Endothelial cell of umbilical vein (primary cell): ENCODE measurements at regions of chr1 and their contacts with region 1.

Region 1: DNA sequence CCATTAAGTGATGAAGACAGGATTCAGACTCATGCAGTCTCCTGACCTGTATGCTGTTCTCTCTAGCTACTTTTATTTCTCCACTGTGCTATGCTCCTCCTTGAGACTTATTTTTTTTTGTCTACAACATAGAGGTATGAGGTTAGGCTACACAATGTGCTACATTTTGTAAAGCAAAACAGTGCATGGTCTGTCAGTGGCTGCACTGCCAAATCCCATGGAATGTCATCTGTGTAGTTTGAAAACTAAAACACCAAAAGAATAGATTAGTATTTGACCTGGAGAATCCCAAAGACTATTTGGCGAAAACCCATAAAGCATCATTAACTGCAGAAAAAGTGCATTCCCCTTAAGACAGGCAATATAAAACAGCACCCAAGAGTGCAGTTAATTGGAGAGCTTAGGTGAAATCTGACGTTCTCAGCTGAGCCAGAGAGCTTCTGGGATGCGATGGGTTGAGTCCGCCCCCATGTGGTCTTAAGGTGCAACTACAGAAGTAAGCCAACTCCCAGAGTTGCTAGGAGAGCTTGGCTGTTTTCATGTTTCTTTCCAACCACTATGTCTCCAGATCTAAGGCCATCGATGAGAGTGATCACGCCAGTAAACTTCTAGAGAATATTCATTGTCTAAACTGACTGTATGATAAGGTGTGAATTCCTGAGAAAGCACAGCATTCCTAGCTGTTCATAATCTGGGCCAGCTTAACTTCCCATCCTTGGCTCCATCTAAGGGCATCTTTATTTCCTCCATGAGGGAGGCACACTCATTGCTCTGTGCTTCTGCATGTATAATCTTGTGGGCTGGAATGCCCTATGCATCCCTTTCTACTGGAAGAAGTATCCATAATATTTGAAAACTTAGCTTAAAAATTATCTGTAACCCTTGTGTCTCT is 20.7 kb upstream of the CYP2J2 start:
- DNase-seq: peak; percentile 67
- H3K4me3 ChIP-seq: no peak overlapping the region
- H3K27ac ChIP-seq: no peak overlapping the region
- H3K4me1 ChIP-seq: no peaks in the 10 kb centered on the region
- H3K27me3 ChIP-seq: peaks cover 0 to 10% of the 10 kb centered on the region in 2 experiments
- CTCF ChIP-seq: peak; percentile 84 to 85
- POLR2A ChIP-seq: no peak

Region 2: DNA sequence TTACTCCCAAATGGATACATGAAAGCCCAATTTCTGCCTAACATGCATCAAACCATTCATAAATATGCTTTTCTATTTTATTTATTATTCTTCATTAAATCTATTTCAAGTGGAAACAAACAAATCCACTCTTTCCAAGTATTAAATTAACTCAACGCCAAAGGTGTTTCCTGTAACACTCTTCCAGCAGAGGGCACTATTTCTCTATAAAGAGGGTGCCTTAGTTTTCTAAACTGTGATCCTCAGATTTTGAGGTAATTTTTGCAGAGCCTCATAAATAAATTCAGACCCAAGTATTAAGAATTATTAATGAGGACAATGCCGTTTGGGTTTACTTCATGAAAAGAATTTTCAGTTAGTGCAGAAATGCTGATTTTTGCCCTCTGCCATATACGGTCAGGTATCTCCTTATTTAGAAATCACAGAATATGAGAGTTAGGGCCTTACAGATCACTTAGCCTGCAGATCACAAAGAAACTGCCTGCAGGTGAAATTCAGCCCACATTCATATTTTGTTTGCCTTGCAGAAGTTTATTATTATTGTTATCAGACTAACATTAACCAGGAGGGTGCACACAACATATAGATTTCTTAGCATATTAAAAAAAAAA is 1207.3 kb before region 1 on chr1:
- CTCF ChIA-PET with region 1: interaction called, 5 read pairs
- POLR2A ChIA-PET with region 1: no interaction called
- dilution Hi-C with region 1: no loop called
- intact Hi-C with region 1: loop called (anchors 5 kb)
- DNase-seq: peak; percentile 73
- H3K4me3 ChIP-seq: no peak overlapping the region
- H3K27ac ChIP-seq: no peak overlapping the region
- H3K4me1 ChIP-seq: peaks cover 3% of the 10 kb centered on the region
- H3K27me3 ChIP-seq: no peaks in the 10 kb centered on the region
- CTCF ChIP-seq: peak; percentile 31 to 38
- POLR2A ChIP-seq: no peak

Region 3: DNA sequence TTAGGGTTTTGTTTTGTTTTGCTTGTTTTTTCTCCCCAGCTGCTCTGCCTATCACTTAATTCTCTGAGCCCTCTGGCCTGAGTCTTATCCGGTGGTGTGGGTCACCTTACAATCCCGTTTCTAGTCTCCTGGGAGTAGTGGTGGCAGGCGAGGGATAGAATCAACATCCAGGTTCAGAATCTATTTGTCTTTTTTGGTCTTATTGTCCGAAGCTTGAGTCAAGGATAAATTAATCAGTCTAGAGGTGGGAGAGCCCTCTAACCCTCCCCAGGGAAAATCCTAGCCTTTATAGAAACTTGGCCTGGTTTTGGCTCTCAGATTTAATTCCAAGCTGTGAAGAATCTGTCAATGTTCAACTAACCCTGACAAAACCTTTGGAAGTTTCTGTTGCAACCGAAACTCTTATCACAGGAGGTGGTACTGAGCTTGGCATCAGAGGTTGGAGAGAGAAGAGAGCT is 404.1 kb before region 1 on chr1:
- CTCF ChIA-PET with region 1: no interaction called
- POLR2A ChIA-PET with region 1: no interaction called
- dilution Hi-C with region 1: no loop called
- intact Hi-C with region 1: no loop called
- DNase-seq: no peak
- H3K4me3 ChIP-seq: no peak overlapping the region
- H3K27ac ChIP-seq: no peak overlapping the region
- H3K4me1 ChIP-seq: no peaks in the 10 kb centered on the region
- H3K27me3 ChIP-seq: no peaks in the 10 kb centered on the region
- CTCF ChIP-seq: no peak
- POLR2A ChIP-seq: no peak

Region 4: DNA sequence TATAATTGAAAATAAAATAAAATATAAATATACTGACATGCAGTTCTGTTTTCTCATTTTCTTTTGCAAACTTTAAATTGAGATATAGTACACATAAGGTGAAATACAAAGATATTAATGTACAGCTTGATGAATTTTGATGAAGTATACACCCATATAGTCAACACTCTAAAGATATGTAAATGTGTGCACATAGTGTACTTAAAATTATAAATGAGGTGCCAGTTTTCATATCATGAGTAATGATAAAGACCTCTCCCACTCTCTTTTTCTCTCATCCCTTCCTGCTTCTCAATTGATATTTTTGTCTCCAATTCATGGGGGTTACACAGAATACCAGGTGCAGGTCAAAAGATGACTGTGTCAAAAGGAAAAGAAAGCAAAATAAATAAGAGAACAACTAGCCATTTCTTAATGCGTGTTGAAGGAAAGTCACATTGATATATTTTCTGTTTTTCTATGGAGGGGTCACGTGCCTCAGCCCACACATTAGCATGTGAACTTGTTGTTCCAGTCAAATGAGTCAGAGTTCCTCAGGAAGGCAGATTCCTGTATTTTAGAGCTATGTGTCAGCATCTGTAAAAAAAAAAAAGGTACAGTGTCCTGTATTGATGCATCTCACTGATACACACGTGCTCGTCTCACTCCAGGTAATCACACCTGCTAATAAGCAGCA is 196.8 kb before region 1 on chr1:
- CTCF ChIA-PET with region 1: no interaction called
- POLR2A ChIA-PET with region 1: no interaction called
- dilution Hi-C with region 1: no loop called
- intact Hi-C with region 1: no loop called
- DNase-seq: peak; percentile 97
- H3K4me3 ChIP-seq: peak overlapping the region in 1 of 3 experiments; percentile 19
- H3K27ac ChIP-seq: peak overlapping the region; percentile 87
- H3K4me1 ChIP-seq: peaks cover 30% of the 10 kb centered on the region
- H3K27me3 ChIP-seq: no peaks in the 10 kb centered on the region
- CTCF ChIP-seq: no peak
- POLR2A ChIP-seq: no peak

Region 5: GRCh38 chr1:59776960-59777852 is 170.1 kb before region 1 on chr1:
- CTCF ChIA-PET with region 1: interaction called, 6 read pairs
- POLR2A ChIA-PET with region 1: no interaction called
- dilution Hi-C with region 1: no loop called
- intact Hi-C with region 1: loop called (anchors 1 kb)
- DNase-seq: peak; percentile 80
- H3K4me3 ChIP-seq: no peak overlapping the region
- H3K27ac ChIP-seq: peak overlapping the region; percentile 36
- H3K4me1 ChIP-seq: peaks cover 11% of the 10 kb centered on the region
- H3K27me3 ChIP-seq: no peaks in the 10 kb centered on the region
- CTCF ChIP-seq: peak; percentile 19 to 44
- POLR2A ChIP-seq: no peak

Region 6: DNA sequence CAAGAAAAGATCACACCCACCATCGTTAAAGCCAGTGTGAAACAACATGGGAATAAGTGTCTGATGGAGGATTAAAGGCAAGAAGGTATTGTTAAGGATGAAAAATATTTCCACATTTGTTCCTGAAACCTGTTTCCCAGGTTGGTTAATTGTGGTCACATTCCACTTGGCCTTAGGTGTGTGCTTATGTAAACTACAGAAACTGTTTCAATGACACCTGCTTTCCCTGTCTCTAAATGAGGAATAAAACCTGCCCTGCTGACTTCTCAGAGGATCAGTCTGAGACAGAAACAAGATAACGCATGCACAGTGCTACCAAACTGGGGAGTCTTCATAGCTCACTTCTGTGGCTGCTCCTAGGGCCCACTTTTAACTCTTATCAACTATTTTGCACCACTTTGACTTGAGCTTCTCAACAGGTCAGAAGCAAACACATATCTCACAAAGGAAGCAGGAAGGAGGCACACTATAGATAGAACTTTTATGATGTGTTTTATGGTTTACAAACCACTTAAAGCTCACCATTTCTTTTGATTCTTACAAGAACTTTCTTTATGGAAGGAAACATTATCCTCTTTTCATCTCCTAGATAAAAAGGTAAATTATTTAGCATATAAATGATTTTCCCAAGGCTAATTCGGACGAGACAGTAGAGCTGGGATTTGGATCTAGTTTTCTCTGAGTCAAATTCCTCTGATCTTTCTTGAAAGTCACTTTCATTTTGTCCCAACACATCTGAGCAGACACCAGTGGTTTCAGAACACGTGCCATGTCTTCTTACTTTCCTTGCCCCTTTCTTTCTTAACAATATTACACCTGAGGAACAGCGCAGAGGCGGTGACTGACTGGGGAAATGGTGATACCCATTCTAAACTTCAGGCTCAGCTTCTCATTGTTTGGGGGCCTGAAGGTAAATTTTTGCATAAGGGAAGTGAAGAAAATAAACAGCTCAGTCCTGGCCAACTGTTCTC is 54.2 kb before region 1 on chr1:
- CTCF ChIA-PET with region 1: interaction called, 18 read pairs
- POLR2A ChIA-PET with region 1: no interaction called
- dilution Hi-C with region 1: no loop called
- intact Hi-C with region 1: no loop called
- DNase-seq: no peak
- H3K4me3 ChIP-seq: no peak overlapping the region
- H3K27ac ChIP-seq: no peak overlapping the region
- H3K4me1 ChIP-seq: no peaks in the 10 kb centered on the region
- H3K27me3 ChIP-seq: no peaks in the 10 kb centered on the region
- CTCF ChIP-seq: no peak
- POLR2A ChIP-seq: no peak

Region 7: GRCh38 chr1:59926381-59927123 is 20.7 kb before region 1 on chr1 and contains the start of gene CYP2J2:
- CTCF ChIA-PET with region 1: interaction called, 18 read pairs
- POLR2A ChIA-PET with region 1: no interaction called
- dilution Hi-C with region 1: no loop called
- intact Hi-C with region 1: no loop called
- DNase-seq: peak; percentile 36
- H3K4me3 ChIP-seq: peak within 1 kb of the TSS; percentile 39 to 56 (median 41)
- H3K27ac ChIP-seq: no peak within 1 kb of the TSS
- H3K4me1 ChIP-seq: no peaks in the 10 kb centered on the region
- H3K27me3 ChIP-seq: peaks cover 20 to 46% of the 10 kb centered on the region in 2 experiments
- CTCF ChIP-seq: no peak
- POLR2A ChIP-seq: no peak
- total RNA-seq, gene CYP2J2: 0.18 and 0.27 TPM in 2 replicates

Region 8: DNA sequence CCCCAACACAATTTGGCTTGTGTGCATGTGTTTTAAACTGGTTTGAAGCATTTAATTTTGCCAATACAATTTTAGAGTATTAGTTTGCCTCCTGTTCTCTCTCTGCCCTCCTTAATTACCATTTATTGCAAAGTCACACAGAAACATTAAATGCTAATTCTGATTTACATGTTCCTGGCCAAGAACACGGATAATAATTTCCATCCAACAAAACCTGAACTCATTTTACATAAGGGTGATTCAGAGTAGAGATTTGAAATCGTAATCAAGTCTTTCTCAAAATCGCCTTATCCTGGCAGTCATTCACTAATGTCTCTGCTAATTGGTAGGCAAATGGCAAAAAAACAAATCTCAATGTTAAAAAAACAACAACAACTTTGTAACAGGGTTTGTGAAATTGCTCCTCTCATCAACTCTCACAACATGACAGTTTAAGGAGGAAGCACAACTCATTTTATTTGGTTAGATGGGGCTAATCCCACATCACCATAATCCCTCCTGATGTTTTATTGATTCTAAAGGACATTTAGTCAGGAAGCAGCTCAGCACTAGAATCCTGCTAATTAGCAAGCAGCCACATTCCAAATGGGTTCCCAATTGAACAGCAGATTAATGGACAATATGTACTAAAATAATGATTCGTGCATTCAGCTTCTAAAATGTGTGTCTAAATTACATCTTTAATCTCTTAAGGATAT is 70.4 kb after region 1 on chr1:
- CTCF ChIA-PET with region 1: no interaction called
- POLR2A ChIA-PET with region 1: no interaction called
- dilution Hi-C with region 1: no loop called
- intact Hi-C with region 1: no loop called
- DNase-seq: no peak
- H3K4me3 ChIP-seq: no peak overlapping the region
- H3K27ac ChIP-seq: no peak overlapping the region
- H3K4me1 ChIP-seq: no peaks in the 10 kb centered on the region
- H3K27me3 ChIP-seq: peaks cover 0 to 4% of the 10 kb centered on the region in 2 experiments
- CTCF ChIP-seq: no peak
- POLR2A ChIP-seq: no peak